ENCODE measurements at regions of chr6 and their contacts with region 1.

Region 1: GRCh38 chr6:143549221-143549941 is 37.9 kb upstream of the FUCA2 start:
- DNase-seq: no peak
- H3K4me3 ChIP-seq: no peak overlapping the region
- H3K27ac ChIP-seq: no peak overlapping the region
- H3K4me1 ChIP-seq: no peaks in the 10 kb centered on the region
- H3K27me3 ChIP-seq: no peaks in the 10 kb centered on the region
- CTCF ChIP-seq: no peak
- EP300 ChIP-seq: no peak
- POLR2A ChIP-seq: no peak
- RAD21 ChIP-seq: no peak

Region 2: DNA sequence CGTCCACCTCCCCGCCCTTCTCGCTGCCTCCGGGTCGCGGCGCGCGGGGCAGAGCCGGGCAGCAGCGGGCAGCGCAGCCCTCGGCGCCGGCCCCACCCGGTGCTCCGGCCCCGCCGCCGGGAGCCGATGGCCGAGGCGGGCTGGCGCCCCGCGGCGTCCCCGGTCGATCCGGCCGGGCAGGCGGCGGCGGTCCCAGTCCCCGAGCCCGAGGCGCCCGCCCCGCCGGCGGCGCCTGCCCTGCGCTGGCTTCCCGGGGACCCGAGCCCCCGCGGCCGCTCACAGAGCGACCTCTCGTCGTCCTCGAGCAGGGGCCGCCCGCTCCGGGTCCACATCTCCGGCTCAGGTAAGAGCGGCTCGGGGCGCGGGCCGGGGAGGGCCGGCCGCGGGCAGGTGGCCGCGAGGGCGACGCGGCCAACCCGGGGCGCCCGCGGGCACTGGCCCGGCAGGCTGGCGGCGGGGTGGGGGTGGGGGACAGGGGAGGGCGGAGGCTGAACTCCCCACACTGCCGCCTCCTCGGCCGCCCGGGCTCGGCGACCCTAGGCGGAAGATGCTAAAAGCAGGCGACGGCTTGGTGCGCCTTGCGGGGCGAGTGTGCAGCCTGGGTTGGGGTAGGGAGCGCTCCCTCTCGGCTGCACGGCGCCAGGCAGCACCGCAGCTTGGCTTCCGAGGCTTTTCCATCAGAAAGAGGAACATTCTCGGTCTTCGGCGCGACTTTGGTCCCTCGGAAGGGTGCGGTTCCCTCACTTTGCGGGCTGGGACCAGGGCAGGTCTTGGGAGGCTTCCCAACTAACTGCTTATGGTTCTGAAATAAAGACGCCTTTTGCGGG is 12.3 kb before region 1 on chr6:
- CTCF ChIA-PET with region 1: interaction called, 15 read pairs
- POLR2A ChIA-PET with region 1: interaction called, 3 read pairs
- DNase-seq: peak in 1 of 2 experiments; percentile 80
- H3K4me3 ChIP-seq: peak overlapping the region; percentile 39 to 71 (median 66)
- H3K27ac ChIP-seq: no peak overlapping the region
- H3K4me1 ChIP-seq: peaks cover 6 to 10% (median 8%) of the 10 kb centered on the region in 4 experiments
- H3K27me3 ChIP-seq: peaks cover 2 to 30% (median 22%) of the 10 kb centered on the region in 4 experiments
- CTCF ChIP-seq: peak; percentile 42 to 70 (median 69)
- EP300 ChIP-seq: no peak
- POLR2A ChIP-seq: peak in 1 of 2 experiments; percentile 37; a peak in 1 of 3 replicates
- RAD21 ChIP-seq: peak; percentile 26 to 29; a peak in 2 of 4 replicates

Region 3: DNA sequence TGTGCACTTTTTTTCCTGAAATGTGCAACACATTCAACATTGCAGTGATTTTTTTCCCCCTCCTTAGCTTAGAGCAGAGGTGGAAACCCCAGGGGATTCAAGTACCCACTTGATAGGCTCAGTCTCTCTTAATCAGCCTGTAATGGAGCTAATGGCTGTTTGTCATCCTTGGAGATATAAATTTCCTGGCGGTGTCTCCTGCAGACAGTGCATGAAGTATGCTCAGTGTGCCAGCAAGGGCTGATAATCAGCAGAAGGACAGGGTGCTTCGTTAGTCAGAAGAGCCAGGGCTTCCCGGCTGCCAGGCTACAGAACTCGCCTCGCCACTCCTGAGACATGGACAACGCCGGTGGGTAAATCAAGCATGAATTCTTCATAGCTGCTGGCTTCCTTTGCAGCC is 58.6 kb after region 1 on chr6:
- CTCF ChIA-PET with region 1: no interaction called
- POLR2A ChIA-PET with region 1: no interaction called
- DNase-seq: no peak
- H3K4me3 ChIP-seq: no peak overlapping the region
- H3K27ac ChIP-seq: no peak overlapping the region
- H3K4me1 ChIP-seq: peaks cover 0 to 5% (median 2%) of the 10 kb centered on the region in 4 experiments; a peak in 2 of 7 replicates
- H3K27me3 ChIP-seq: no peaks in the 10 kb centered on the region
- CTCF ChIP-seq: no peak
- EP300 ChIP-seq: no peak
- POLR2A ChIP-seq: no peak
- RAD21 ChIP-seq: no peak

Measured in H1 (cell line).